Activated naive CD8-positive, alpha-beta T cell treated with anti-CD3 and anti-CD28 coated beads, Interleukin-2, amount 10 ng/mL, durations not matched to agents 7 days and 5 days (primary cell): ENCODE measurements at regions of chr22 and their contacts with region 1.

Region 1: DNA sequence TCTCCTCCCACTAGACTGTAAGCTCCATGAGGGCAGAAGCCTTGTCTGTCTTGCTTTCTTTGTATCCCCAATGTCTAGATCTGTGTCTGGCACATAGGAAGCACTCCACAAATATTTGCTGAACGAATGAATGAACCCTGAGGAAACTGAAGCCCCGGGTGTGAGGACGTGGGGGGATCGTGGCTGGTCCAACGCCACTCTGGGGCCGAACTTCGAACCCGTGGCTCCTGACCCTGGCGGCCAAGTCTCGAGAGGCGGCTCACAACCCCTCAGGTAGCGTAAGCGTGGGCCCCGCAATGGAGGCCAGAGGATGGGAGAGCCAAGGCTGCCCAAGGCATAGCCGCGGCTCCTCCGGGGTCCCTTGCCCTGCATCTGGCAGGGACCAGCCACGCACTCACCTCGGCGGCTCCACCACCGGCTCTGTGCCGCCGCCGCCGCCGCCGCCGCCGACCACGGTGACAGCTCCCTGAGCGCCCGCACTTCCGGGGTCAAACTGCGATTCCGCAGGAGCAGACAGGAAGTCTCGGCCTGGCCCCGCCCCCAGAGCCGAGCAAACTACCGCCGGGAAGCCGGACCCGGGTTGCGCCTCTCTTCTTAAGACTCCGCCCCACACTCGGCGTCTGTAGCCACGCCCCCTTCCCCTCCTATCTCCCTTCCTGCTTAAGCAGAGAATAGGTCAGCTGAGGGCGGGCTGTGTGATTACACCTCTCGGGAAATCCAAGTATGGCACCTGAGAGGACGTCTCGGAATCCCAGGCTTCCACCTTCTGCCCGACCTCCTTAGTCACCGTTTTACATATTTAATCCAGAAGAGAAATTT is at the start of gene ASCC2:
- DNase-seq: peak; percentile 99
- ATAC-seq: peak; percentile 98
- H3K4me3 Mint-ChIP-seq: peak within 1 kb of the TSS; percentile 97
- H3K27ac Mint-ChIP-seq: peak within 1 kb of the TSS; percentile 91
- H3K4me1 Mint-ChIP-seq: peaks cover 29% of the 10 kb centered on the region
- H3K27me3 Mint-ChIP-seq: peaks cover 9% of the 10 kb centered on the region
- total RNA-seq, gene ASCC2: 88.6 to 91.5 TPM

Region 2: GRCh38 chr22:29883045-29883774 is 45.2 kb after region 1 on chr22 and contains the start of gene MTMR3:
- POLR2A ChIA-PET with region 1: interaction called, 16 read pairs
- DNase-seq: peak; percentile 98
- ATAC-seq: peak; percentile 84
- H3K4me3 Mint-ChIP-seq: peak within 1 kb of the TSS; percentile 91
- H3K27ac Mint-ChIP-seq: peak within 1 kb of the TSS; percentile 84
- H3K4me1 Mint-ChIP-seq: peaks cover 12% of the 10 kb centered on the region
- H3K27me3 Mint-ChIP-seq: no peaks in the 10 kb centered on the region
- total RNA-seq, gene MTMR3: 33.9 to 40.8 TPM